ENCODE measurements at regions of chr22 and their contacts with region 1.

Region 1: DNA sequence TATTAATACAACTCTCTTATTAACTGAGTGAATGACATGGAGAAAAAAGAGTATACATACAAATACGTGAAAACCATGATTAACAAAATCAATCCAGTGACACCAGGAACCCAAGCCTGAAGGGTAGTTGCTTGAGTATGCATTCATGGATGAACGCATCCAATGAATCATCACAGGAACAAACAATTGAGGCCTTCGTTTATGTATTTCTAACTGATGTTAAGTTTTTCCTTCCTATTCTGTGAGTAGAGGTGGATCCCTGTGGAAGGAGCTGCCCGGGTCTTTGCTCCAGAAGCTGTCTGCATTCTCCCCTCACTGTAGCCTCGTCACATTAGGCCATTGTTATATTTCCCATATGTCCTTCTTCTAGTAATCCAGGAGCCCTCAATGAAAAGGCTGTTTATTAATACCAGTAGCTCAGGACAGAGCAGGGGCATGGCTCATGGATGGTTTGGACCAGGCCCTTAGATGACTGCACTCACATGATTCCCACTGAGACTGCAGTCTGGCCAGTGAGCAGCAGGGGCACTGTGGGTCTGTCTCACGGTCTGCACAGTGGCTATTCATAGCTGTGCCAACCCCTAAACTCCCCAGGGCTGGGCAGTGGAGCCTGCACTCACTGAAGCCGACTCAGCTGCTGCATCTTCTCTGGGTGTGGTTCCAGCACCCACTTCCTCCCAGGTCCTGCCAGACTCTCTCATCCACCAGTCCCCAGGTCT is 128.1 kb upstream of the TOP3B start:
- DNase-seq: peak; percentile 82
- ATAC-seq: peak; percentile 92
- H3K4me3 Mint-ChIP-seq: peak overlapping the region; percentile 67
- H3K27ac Mint-ChIP-seq: peak overlapping the region; percentile 95
- H3K4me1 Mint-ChIP-seq: peaks cover 47% of the 10 kb centered on the region
- H3K27me3 Mint-ChIP-seq: no peaks in the 10 kb centered on the region
- CTCF ChIP-seq: no peak

Region 2: GRCh38 chr22:22030493-22031182 is 80.1 kb before region 1 on chr22:
- CTCF ChIA-PET with region 1: interaction called, 37 read pairs
- POLR2A ChIA-PET with region 1: interaction called, 30 read pairs
- intact Hi-C with region 1: loop called (anchors 1 kb)
- DNase-seq: peak; percentile 62
- ATAC-seq: peak; percentile 79
- H3K4me3 Mint-ChIP-seq: peak overlapping the region; percentile 84
- H3K27ac Mint-ChIP-seq: peak overlapping the region; percentile 97
- H3K4me1 Mint-ChIP-seq: peaks cover 84% of the 10 kb centered on the region
- H3K27me3 Mint-ChIP-seq: no peaks in the 10 kb centered on the region
- CTCF ChIP-seq: no peak

Region 3: DNA sequence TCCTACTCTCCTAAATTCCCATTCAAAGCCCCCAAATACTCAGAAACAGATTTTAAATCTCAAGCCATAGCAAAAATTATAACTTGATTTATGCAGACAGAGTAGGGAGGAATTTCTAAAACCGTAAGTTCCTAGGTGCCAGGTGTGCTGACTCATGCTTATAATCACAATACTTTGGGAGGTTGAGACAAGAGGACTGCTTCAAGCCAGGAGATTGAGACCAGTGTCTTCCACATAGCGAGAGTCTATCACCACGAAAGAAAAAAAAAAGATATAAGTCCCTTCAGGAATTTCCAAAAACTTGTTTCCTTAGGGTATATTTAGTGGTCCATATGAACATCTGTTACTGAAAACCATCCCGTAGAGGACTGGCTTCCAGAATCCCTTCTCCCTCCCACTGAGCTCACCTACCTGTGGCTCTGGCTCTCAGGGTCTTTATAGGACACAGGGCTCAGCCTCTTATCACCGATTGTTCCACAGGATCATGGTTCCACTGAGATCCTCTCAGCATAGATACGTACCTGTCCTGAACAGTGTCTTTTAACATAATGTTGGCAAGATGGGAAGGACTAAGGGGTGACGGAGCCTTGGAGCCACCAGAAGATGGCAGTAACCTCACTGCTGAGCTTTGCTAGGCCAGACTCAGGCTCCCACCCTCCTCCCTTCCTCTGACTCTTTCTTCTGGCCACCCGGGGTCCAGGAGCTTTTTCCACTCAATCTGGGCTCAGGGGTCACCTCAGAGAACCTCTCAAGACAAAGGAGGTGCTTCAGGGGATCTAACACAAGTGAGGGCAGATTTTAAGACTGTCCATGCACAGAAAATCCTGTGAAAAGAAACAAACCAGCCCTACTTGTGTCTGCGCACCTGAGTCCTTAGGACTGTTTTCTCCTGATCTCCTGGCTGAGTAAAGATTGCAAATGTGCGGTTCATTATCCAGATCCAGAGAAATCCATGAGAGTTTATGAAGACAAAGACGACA is 10.6 kb before region 1 on chr22:
- CTCF ChIA-PET with region 1: interaction called, 42 read pairs
- POLR2A ChIA-PET with region 1: interaction called, 33 read pairs
- intact Hi-C with region 1: loop called (anchors 1 kb)
- DNase-seq: no peak
- ATAC-seq: peak; percentile 19
- H3K4me3 Mint-ChIP-seq: no peak overlapping the region
- H3K27ac Mint-ChIP-seq: peak overlapping the region; percentile 92
- H3K4me1 Mint-ChIP-seq: peaks cover 52% of the 10 kb centered on the region
- H3K27me3 Mint-ChIP-seq: no peaks in the 10 kb centered on the region
- CTCF ChIP-seq: no peak

Region 4: GRCh38 chr22:22161924-22162851 is 51.5 kb after region 1 on chr22:
- CTCF ChIA-PET with region 1: interaction called, 30 read pairs
- POLR2A ChIA-PET with region 1: interaction called, 36 read pairs
- intact Hi-C with region 1: no loop called
- DNase-seq: peak; percentile 47
- ATAC-seq: peak; percentile 92
- H3K4me3 Mint-ChIP-seq: peak overlapping the region; percentile 85
- H3K27ac Mint-ChIP-seq: peak overlapping the region; percentile 97
- H3K4me1 Mint-ChIP-seq: peaks cover 83% of the 10 kb centered on the region
- H3K27me3 Mint-ChIP-seq: no peaks in the 10 kb centered on the region
- CTCF ChIP-seq: no peak

Region 5: GRCh38 chr22:22201185-22201929 is 90.7 kb after region 1 on chr22:
- CTCF ChIA-PET with region 1: interaction called, 30 read pairs
- POLR2A ChIA-PET with region 1: interaction called, 20 read pairs
- intact Hi-C with region 1: no loop called
- DNase-seq: peak; percentile 58
- ATAC-seq: peak; percentile 65
- H3K4me3 Mint-ChIP-seq: no peak overlapping the region
- H3K27ac Mint-ChIP-seq: peak overlapping the region; percentile 80
- H3K4me1 Mint-ChIP-seq: peaks cover 63% of the 10 kb centered on the region
- H3K27me3 Mint-ChIP-seq: no peaks in the 10 kb centered on the region
- CTCF ChIP-seq: no peak

Region 6: GRCh38 chr22:22322792-22323191 is 212.1 kb after region 1 on chr22:
- CTCF ChIA-PET with region 1: interaction called, 6 read pairs
- POLR2A ChIA-PET with region 1: no interaction called
- intact Hi-C with region 1: loop called (anchors 1 kb)
- DNase-seq: no peak
- ATAC-seq: peak; percentile 11
- H3K4me3 Mint-ChIP-seq: peak overlapping the region; percentile 15
- H3K27ac Mint-ChIP-seq: no peak overlapping the region
- H3K4me1 Mint-ChIP-seq: peaks cover 43% of the 10 kb centered on the region
- H3K27me3 Mint-ChIP-seq: no peaks in the 10 kb centered on the region
- CTCF ChIP-seq: no peak